Activated B cell treated with CpG ODN at 0.5 μM for 24 hours (primary cell): ENCODE measurements at regions of chr16 and their contacts with region 1.

Region 1: DNA sequence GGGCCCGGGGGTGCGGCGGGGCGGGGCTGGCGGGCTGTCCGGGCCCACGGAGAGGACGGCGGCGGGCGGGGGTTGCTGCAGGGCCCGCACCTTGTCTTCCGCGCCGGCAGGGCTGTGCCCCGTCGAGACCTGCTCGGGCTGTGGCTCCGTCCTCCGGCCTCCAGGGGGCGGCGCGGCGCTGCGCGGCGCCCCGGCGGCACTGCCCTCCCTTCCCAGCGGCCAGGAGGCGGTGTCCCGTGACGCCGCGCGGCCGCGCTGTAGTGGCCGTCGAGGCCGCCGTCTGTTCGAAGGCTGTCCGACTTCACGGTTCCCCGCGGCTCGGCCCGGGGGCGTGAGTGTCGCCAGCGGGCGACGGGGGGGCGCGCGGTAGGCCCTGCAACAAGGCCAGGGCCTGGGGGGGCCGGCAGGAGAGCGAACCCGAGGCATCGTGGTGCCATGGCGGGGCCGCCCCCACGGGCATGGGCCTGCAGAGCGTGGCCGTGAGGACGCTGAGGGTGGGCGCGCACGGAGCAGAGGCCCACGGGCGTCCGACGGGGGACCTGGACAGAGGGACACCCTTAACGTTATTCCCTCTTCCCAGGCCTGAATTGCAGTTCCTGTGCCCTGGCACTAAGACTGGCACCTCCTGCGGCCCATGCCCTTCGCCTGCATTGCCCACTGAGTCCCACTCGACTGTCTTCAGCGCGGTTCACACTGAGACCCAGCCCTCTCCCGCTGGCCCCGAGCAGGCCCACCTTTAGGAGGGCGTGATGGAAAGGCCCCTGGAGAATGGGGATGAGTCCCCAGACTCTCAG is at the start of gene PLEKHG4:
- DNase-seq: peak; percentile 73
- ATAC-seq: peak; percentile 97
- H3K4me3 Mint-ChIP-seq: peak within 1 kb of the TSS; percentile 79
- H3K27ac Mint-ChIP-seq: no peak within 1 kb of the TSS
- H3K4me1 Mint-ChIP-seq: peaks cover 3% of the 10 kb centered on the region
- H3K27me3 Mint-ChIP-seq: no peaks in the 10 kb centered on the region
- CTCF ChIP-seq: peak; percentile 41
- total RNA-seq, gene PLEKHG4: 7.8 TPM in 2 replicates

Region 2: DNA sequence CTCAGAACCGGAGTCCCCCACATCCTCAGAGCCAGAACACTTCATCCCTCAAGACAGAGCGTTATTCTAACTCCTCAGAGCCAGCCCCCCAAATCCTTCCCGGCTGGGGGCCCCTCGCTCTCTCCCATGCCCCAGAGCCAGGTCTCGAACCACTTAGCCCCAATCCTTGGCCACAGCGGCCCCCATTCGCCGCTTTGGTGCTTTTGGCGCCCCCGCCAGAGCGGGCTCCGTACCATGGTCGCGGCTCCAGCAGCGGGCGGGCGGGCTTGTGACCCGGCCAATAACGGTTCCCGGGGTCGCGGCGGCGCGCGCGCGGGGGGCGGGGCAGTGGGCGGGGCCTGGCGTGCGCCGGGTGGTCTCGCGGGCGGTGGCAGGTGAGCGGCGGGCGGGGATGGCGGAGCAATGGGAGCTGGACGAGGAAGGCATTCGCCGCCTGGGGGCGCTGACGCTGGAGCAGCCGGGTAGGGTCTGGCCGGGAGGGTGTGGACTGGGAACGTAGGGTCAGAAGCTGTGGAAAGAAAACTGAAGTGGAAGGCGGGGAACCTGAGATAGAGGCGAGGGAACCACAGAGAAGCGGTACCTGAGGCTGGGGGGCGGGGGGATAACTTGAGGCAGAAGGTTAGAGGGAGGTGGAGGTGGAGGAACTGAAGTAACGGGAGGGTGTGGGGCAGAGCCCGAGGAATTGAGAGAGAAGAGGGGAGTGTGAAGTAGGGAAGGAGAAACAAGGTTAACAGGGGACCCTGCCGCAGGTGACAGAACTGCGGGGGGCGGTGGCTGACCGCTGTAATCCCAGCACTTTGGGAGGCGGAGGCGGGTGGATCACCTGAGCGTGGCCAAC is 47.2 kb after region 1 on chr16 and contains the starts of genes KCTD19 and LRRC36:
- CTCF ChIA-PET with region 1: no interaction called
- POLR2A ChIA-PET with region 1: no interaction called
- intact Hi-C with region 1: loop called (anchors 5 kb)
- DNase-seq: peak; percentile 60
- ATAC-seq: peak; percentile 56
- H3K4me3 Mint-ChIP-seq: peak within 1 kb of the TSS; percentile 75
- H3K27ac Mint-ChIP-seq: peak within 1 kb of the TSS; percentile 63
- H3K4me1 Mint-ChIP-seq: peaks cover 28% of the 10 kb centered on the region
- H3K27me3 Mint-ChIP-seq: peaks cover 2% of the 10 kb centered on the region
- CTCF ChIP-seq: no peak
- total RNA-seq, gene KCTD19: not detected in 2 replicates
- total RNA-seq, gene LRRC36: 0.49 and 0.69 TPM in 2 replicates